Right ventricle myocardium superior (tissue), 1 donor: ENCODE measurements at regions of chr9 and their contacts with region 1.

Region 1: DNA sequence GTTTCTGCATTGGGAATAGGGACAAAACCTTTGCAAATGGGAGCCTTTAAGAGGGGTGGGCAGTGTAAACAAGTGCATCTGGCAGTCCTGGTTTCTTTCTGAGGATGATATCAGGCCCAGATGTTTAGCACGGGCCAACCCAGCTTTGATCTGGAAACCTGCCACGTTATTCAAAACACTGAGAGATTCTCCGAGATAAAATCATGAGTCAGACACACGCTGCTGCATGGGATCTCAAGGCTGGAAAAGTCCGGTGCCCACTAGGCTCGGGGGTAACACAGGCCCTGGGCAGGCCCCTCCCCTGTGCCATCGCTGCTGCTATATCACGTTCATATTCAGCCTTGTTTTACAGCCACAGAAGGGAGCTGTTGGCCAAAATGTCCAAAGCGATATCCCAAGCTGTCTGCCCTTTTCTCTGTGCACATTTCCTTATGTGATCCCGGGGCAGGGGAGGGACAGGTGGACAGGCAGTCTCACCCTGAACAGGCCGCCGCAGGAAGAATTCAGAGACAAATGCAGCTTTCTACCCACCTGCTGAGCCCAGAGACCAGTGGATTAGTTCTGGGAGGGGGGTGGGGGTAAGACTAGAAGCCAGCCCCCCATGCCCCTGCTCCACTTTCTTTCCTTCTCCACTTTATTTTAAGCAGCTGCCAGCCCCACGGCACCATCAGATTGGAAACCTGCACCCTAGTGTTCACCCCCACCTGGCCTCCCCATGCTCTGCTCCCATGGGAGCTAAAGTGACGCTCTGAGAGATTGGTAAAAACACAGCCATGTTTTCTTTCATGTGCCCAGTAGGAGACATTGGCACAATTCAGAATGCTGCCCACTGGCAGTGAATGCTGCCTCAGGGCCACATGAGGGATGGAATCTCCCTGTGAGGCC is 63.1 kb downstream of the TMOD1 start:
- DNase-seq: no peak
- ATAC-seq: peak; percentile 64

Region 2: DNA sequence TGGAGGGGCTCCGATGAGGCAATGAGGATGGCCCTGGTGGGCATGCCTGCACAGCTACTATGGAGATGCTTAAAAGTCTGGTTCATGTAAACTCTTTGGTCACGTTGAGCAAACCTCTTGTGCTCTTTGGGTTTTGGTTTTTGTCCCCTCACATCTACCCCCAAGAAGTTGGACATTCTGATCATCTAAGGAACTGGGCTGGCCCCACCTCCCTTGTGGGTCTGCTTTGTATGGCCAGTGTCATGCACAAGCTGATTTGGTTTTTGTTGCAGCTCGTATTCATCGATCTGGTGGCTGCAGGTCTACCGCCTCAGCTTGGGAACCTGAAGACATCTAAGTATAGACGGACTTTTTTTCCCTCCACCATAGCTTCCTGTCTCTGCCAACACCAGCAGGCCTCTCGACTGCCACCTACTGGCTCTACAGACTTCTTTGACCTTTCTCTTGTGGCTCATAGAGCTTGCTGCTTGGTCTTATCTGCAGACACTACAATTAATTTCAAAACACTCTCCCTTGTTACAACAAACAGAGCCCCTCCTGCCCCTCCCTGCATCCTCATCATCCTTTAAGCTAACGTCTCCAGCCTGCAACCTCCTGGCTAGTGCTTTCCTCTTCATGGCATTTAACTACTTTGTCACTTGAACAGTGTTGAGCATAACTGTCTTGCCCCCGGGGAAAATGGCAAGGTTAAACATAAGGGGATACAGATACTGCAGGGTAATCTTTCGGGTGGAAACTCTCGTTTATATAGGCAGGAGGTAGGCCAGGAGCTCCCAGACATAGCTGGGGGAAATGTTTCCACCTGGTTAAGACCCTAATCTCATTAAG is 34.1 kb after region 1 on chr9:
- intact Hi-C with region 1: loop called (anchors 5 kb)
- DNase-seq: peak; percentile 72
- ATAC-seq: peak; percentile 67

Region 3: DNA sequence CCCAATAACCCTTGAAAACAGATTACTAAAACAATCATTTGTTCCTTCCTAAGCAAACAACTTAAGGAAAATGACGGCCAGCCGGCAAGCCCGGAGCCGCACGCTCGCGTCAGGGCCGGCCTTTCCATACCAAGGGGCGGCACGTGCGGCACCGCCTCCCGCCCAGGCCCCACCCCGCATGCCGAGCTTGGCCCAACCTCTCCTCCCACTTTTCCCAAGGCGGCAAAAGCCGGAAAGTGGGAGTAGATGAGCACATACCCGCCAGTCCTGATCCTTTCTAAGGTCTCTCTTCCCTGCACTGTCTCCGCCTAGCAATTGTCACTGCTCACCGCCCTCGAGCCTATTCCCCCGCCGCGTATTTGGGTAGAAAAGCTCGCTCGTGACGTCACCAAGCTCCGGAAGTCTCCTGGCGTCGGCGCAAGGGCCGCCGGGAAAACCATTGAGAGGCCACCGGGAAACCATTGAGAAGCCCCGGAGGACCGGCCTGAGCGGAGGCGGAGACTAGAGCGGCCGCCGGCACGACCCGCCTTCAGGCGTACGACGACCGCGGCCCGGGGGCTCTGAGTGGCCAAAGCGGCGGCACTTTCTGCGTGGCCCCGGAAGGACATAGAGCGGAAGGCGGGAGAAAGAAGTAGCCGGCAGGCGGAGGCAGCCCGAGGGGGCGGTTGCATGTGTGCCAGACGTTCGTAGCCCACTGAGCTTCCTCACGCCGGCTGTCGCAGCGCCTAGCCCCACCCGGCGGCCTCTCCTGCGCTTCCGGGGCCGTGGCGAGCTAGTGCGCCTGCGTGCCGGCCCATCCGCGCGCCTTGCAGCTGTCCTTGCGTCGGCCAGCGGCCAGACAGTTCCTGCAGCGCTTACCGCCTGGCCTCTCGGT is 68.7 kb after region 1 on chr9 and contains the starts of genes NCBP1 and TSTD2:
- intact Hi-C with region 1: no loop called
- DNase-seq: peak; percentile 99
- ATAC-seq: peak; percentile 94
- total RNA-seq, gene NCBP1: 20.0 TPM
- total RNA-seq, gene TSTD2: 26.1 TPM